ENCODE measurements at regions of chr6 and their contacts with region 1.

Region 1: DNA sequence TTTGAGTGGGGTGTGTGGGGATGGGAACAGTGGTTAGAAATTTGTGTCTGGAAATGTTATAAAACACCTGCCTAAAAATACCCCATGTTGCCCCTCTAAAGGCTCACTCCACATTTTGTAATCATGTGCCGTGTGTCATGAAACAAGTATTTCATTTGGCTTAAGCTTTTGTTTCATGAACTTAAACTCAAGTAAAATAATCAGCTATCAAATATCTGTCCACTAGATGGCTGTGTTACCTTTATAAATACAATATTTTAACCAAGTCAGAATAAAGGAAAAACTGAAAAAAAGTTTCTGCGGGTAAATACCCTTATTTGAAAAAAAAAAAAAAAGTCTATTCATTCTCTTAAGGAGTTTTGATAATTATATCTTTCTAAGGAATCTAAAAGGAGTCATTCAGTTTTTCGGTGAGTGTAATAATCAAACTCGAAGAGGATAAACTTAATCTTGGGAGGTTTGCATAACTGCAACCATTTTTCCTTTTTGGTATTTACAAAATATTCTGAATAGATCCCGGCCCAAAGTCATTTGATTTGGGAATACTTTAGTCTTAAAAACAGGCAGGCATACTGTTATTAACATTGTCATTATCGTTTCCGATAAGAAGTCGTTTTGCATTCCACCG is 29.9 kb upstream of the MTRF1L start:
- DNase-seq: no peak
- ATAC-seq: peak in 3 of 4 donors; percentile 31 to 72 (median 46)
- H3K4me3 ChIP-seq: no peak overlapping the region
- H3K27ac ChIP-seq: no peak overlapping the region
- H3K4me1 ChIP-seq: peaks cover 0 to 5% (median 0%) of the 10 kb centered on the region in 4 donors
- H3K27me3 ChIP-seq: no peaks in the 10 kb centered on the region
- CTCF ChIP-seq: peak; percentile 43 to 55 (median 50)
- POLR2A ChIP-seq: no peak

Region 2: DNA sequence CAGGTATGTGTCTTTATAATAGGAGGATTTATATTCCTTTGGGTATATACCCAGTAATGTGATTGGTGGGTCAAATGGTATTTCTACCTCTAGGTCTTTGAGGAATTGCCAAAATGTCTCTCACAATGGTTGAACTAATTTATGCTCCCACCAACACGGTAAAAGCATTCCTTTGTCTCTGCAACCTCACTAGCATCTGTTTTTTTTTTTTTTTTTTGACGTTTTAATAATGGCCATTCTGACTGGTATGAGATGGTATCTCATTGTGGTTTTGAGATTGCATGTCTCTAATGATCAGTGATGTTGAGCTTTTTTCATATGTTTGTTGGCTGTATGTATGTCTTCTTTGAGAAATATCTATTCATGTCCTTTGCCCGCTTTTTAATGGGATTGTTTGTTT is 243.6 kb after region 1 on chr6:
- intact Hi-C with region 1: no loop called
- DNase-seq: no peak
- ATAC-seq: no peak
- H3K4me3 ChIP-seq: no peak overlapping the region
- H3K27ac ChIP-seq: no peak overlapping the region
- H3K4me1 ChIP-seq: no peaks in the 10 kb centered on the region
- H3K27me3 ChIP-seq: no peaks in the 10 kb centered on the region
- CTCF ChIP-seq: no peak
- POLR2A ChIP-seq: no peak

Region 3: GRCh38 chr6:153511896-153512496 is 479.6 kb after region 1 on chr6:
- intact Hi-C with region 1: loop called (anchors 10 kb)
- DNase-seq: no peak
- ATAC-seq: peak; percentile 79 to 87 (median 81)
- H3K4me3 ChIP-seq: no peak overlapping the region
- H3K27ac ChIP-seq: no peak overlapping the region
- H3K4me1 ChIP-seq: no peaks in the 10 kb centered on the region
- H3K27me3 ChIP-seq: no peaks in the 10 kb centered on the region
- CTCF ChIP-seq: peak; percentile 59 to 73 (median 64)
- POLR2A ChIP-seq: no peak

Measured in right lobe of liver (tissue), 6 donors.